Activated naive CD4-positive, alpha-beta T cell treated with anti-CD3 and anti-CD28 coated beads for 36 hours (primary cell): ENCODE measurements at regions of chr11 and their contacts with region 1.

Region 1: GRCh38 chr11:61129639-61130523 is 27.6 kb downstream of the CD5 start:
- DNase-seq: peak; percentile 96
- H3K4me3 Mint-ChIP-seq: peak overlapping the region; percentile 2
- H3K27ac Mint-ChIP-seq: peak overlapping the region; percentile 50
- H3K4me1 Mint-ChIP-seq: peaks cover 21% of the 10 kb centered on the region
- H3K27me3 Mint-ChIP-seq: no peaks in the 10 kb centered on the region

Region 2: DNA sequence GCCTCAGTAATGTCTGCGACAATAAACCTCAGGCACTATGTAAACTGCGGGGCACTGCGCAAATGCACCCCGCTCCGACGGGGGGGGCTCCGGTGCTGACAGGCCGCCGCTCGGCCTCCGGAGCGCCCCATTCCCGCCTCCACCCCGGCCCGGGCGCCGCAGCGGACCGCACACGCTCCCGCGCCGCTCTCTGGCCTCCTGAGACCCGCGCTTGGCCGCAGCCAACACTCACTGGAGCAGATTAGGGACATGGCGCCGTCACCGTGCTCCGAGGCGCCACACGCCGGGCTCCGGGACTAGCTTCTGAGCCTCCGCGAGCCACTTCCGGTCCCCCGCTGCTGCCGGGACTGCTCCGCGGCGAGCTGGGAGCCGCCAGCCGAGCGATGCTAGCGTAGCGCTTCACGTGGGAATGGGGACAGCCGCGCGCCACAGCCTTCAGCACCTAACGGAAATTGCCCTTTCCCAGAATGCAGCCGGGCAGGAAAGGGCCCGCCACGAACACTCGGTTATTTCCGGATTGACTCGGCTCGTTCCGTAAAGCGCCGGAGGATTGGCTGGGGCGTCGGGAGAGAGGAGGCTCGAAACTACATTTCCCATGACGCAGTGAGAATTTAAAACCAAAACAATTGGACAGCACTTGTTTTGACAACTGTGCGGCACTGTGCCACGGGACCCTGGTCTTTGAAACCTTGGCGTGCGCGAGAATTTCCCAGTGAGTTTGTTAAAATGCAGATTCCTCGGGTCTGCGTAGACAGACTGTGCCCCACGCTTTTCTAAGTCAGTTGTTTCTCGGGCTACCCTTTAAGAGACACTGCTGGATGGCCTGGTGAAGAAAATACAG is 223.5 kb before region 1 on chr11 and contains the start of gene PRPF19:
- CTCF ChIA-PET with region 1: interaction called, 4 read pairs
- intact Hi-C with region 1: loop called (anchors 2 kb)
- DNase-seq: peak; percentile 100
- H3K4me3 Mint-ChIP-seq: peak within 1 kb of the TSS; percentile 80
- H3K27ac Mint-ChIP-seq: peak within 1 kb of the TSS; percentile 92
- H3K4me1 Mint-ChIP-seq: peaks cover 40% of the 10 kb centered on the region
- H3K27me3 Mint-ChIP-seq: no peaks in the 10 kb centered on the region
- total RNA-seq, gene PRPF19: 108 to 119 TPM

Region 3: GRCh38 chr11:60934124-60934789 is 195.6 kb before region 1 on chr11:
- CTCF ChIA-PET with region 1: no interaction called
- intact Hi-C with region 1: no loop called
- DNase-seq: no peak
- H3K4me3 Mint-ChIP-seq: no peak overlapping the region
- H3K27ac Mint-ChIP-seq: no peak overlapping the region
- H3K4me1 Mint-ChIP-seq: no peaks in the 10 kb centered on the region
- H3K27me3 Mint-ChIP-seq: no peaks in the 10 kb centered on the region

Region 4: DNA sequence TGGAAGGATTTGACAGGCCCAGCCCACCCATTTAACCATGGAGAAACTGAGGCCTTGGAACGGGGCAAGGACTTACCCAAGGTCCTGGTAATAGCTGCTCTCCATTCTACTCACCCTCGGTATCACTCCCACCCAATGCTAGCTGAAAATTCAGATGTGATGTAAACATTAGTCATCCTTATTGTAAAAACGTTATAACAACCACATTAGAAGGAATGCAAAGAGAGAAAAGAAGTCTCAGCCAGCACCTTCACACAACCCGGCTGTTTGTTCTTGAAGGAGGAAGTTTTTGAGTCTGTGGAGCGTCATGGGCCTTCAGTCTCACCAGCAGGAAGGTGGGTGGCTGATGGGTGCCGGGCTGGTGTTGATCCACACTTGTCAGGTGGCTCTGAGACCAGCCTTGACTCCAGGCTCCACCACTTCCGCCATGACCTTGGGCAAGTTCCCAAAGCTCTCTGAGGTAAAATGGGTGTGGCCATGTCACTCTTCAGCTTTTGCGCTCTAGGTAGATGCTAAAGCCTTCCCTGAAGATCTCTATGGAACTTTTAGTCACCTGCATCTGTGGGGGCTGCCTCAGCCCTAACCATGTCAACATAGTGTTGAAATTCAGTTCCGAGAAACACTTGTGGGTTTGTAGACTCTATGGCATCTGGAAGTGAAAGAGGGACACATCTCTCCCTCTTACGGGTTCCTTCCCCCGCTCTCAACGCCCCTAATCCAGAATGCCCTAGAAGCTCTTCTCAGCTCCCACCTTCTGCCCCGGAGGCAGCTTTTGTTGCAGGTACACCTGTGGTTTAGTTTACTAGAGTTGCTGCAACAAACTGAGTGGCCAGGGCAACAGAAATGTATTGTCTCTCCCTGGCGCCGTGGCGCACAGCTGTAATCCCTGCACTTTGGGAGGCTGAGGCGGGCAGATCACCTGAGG is 143.6 kb before region 1 on chr11:
- CTCF ChIA-PET with region 1: no interaction called
- intact Hi-C with region 1: loop called (anchors 1 kb)
- DNase-seq: peak; percentile 97
- H3K4me3 Mint-ChIP-seq: peak overlapping the region; percentile 77
- H3K27ac Mint-ChIP-seq: peak overlapping the region; percentile 97
- H3K4me1 Mint-ChIP-seq: peaks cover 90% of the 10 kb centered on the region
- H3K27me3 Mint-ChIP-seq: no peaks in the 10 kb centered on the region

Region 5: DNA sequence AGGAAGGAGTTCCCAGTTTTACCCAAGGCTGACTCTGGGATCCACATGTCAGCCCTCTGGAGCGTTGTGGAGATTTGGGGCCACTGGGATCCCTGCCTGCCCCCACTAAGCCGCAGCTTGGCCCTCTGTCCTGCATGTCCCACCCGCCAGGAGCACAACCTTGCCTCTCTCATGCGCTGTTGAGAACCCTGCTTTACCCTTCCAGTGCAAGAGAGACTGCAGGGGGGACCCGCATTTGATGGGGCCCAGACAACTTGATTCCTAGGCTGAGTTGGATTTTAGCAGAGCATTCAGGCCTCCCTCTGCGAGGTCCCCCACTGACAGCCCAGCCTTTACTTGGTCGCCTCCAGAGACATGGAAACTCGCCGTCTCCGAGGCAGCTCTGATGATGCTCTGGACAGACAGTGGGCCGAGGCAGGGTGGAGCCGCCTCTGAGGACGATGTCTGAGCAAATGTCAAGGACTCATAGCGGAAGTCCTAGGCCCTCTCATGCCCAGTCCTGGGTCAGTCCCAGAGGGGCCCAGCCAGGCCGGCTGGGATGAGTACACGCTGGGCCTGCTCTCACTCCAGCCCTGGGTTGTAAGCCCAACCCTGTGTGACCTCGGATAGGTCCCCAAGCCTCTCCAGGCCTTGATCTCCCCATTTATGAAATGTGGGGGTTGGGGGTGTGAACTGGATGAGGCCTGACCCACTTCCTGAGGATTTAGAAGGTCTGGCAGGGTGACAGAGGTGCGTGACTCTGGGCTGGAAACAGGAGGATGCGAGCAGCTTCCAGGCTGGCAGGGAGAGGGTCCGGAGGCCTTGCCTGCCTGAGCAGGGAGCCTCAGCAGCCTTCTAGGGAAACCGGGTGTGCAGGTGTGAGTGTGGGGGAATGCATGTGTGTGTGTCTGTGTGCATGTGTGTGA is 27.0 kb before region 1 on chr11:
- CTCF ChIA-PET with region 1: no interaction called
- intact Hi-C with region 1: loop called (anchors 1 kb)
- DNase-seq: peak; percentile 67
- H3K4me3 Mint-ChIP-seq: no peak overlapping the region
- H3K27ac Mint-ChIP-seq: no peak overlapping the region
- H3K4me1 Mint-ChIP-seq: peaks cover 31% of the 10 kb centered on the region
- H3K27me3 Mint-ChIP-seq: no peaks in the 10 kb centered on the region

Region 6: DNA sequence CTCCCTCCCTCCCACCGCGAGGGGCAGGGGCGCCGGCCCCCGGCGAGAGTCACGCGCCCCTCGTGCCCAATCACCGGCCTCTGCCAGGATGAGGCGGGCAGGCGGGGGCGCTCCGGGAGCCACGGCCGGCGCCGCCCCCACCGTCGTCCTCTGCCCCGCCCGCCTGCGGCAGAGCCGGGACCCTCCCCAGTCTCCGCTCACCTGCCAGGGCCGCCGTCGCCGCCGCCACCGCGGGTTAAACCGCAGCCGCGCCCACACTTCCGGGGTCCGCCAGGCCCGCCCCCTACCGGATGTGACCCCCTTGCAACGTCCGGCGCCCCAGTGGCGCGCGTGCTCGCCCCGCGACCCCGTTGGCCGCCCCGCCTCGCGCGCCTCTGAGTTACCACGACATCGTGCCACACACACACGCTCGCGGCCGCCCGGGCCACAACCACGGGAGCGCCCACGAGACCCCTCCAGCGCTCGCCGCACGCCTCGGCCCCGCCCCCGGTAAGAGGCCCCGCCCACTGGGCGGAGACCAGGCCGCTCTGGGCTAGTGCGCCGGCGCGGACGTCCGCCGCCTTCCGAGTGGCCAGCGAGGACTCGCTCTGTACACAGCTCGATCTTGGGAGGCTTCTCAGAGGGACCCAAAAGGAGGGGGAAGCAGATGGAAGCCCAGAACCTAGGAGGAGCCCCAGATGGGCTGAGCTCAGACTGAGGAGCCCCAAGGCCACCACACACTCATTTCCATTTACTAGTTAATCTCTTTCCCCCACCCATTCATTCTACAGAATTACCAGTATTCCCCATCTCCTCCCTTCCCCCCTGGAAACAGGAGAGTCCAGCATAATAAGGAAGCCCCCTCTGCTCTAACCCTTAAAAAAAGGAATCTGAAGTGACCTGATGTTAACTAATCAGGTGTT is 31.6 kb after region 1 on chr11 and contains the start of gene VPS37C:
- CTCF ChIA-PET with region 1: interaction called, 3 read pairs
- intact Hi-C with region 1: loop called (anchors 1 kb)
- DNase-seq: peak; percentile 91
- H3K4me3 Mint-ChIP-seq: peak within 1 kb of the TSS; percentile 94
- H3K27ac Mint-ChIP-seq: peak within 1 kb of the TSS; percentile 93
- H3K4me1 Mint-ChIP-seq: peaks cover 62% of the 10 kb centered on the region
- H3K27me3 Mint-ChIP-seq: no peaks in the 10 kb centered on the region
- total RNA-seq, gene VPS37C: 8.5 to 8.9 TPM